ENCODE measurements at regions of chr2 and their contacts with region 1.

Region 1: GRCh38 chr2:142682528-142682927 is 194.9 kb upstream of the KYNU start:
- DNase-seq: no peak

Region 2: GRCh38 chr2:142642654-142643053 is 39.9 kb before region 1 on chr2:
- intact Hi-C with region 1: no loop called
- DNase-seq: no peak

Region 3: GRCh38 chr2:142974288-142975024 is 291.9 kb after region 1 on chr2:
- intact Hi-C with region 1: loop called (anchors 5 kb)
- DNase-seq: no peak

Measured in head of caudate nucleus (tissue), 42 donors.